ENCODE measurements at regions of chr1 and their contacts with region 1.

Region 1: DNA sequence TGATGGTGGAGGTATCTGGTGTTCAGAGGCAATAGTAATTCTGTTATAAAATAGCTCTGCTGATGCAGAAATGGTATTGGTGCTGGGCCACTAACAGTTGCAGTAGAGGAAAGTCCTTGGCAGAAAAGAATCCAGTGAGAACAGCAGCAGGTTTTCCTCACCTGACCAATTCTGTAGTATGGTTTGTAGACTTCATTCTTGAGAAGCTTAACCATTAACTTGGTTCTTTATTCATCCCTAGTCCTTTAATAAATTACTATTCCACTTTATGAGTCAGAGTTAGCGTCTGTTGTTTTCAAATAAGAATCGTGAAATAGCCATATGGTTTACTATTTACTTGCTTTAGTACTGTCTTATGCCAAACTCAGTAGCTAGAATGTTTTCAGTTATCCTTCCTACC is 128.5 kb upstream of the SERTAD4 start:
- DNase-seq: no peak
- H3K4me3 Mint-ChIP-seq: no peak overlapping the region
- H3K27ac Mint-ChIP-seq: no peak overlapping the region
- H3K4me1 Mint-ChIP-seq: peaks cover 24% of the 10 kb centered on the region
- H3K27me3 Mint-ChIP-seq: no peaks in the 10 kb centered on the region
- CTCF ChIP-seq: no peak

Region 2: GRCh38 chr1:210024996-210025395 is 79.1 kb before region 1 on chr1:
- CTCF ChIA-PET with region 1: no interaction called
- intact Hi-C with region 1: no loop called
- DNase-seq: peak; percentile 4
- H3K4me3 Mint-ChIP-seq: no peak overlapping the region
- H3K27ac Mint-ChIP-seq: no peak overlapping the region
- H3K4me1 Mint-ChIP-seq: no peaks in the 10 kb centered on the region
- H3K27me3 Mint-ChIP-seq: peaks cover under 1% of the 10 kb centered on the region
- CTCF ChIP-seq: no peak

Region 3: DNA sequence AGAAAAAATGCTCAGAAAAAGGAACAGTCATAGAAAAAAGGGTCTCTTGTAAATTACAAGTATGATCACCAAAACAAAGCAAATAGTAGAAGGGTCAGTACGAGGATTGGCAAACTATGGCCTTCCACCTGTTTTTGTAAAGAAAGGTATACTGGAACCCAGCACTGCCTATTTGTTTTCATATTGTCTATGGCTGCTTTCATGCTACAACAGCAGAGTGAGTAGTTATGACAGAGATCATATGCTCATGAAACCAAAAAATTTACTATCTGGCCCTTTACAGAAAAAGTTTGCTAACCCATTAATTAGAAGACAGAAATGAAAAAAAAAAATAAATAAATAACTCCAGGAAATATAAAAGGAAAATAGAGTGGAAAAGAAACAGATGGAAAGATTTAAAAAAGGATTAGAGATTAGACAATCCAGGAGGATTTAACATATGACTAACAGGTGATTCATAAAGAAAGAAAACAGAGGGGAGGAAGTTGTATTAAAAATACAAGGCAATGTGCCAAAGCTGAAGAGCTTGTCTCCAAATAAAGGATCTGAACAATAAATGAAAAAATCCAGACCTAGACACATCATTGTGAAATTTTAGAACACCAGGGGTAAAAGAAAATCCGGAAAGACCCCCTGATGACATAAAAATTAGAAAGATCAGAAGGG is 20.0 kb after region 1 on chr1:
- CTCF ChIA-PET with region 1: interaction called, 3 read pairs
- intact Hi-C with region 1: loop called (anchors 2 kb)
- DNase-seq: no peak
- H3K4me3 Mint-ChIP-seq: no peak overlapping the region
- H3K27ac Mint-ChIP-seq: peak overlapping the region; percentile 33
- H3K4me1 Mint-ChIP-seq: peaks cover 19% of the 10 kb centered on the region
- H3K27me3 Mint-ChIP-seq: no peaks in the 10 kb centered on the region
- CTCF ChIP-seq: no peak

Region 4: DNA sequence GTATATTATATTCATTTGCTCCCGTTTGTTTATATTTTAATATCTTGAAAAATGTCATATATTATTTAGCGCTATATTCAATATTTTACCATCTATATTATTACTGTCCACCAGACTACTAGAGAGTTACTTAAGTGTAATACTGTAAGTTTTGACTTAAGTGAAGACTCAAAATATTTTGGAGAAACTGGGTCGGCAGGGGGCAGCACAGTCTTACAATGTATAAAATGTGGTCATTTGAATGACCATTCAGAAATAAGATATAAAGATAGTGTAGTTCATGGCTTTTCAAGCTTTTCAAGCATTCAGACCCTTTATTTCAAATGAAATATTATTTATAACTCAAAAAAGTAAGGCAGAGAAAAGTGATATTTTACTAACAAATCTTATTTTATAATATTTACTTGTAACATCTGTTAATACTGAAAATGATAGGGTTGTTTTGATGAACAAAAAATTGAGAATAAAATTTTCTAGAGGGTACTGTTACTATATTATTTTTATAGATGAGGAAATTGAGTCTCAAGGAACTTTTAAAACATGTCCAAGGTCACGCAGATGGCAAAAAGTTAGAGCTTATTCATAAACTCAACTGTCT is 39.5 kb after region 1 on chr1:
- CTCF ChIA-PET with region 1: no interaction called
- intact Hi-C with region 1: no loop called
- DNase-seq: peak; percentile 84
- H3K4me3 Mint-ChIP-seq: no peak overlapping the region
- H3K27ac Mint-ChIP-seq: no peak overlapping the region
- H3K4me1 Mint-ChIP-seq: no peaks in the 10 kb centered on the region
- H3K27me3 Mint-ChIP-seq: no peaks in the 10 kb centered on the region
- CTCF ChIP-seq: no peak